Activated naive CD4-positive, alpha-beta T cell treated with anti-CD3 and anti-CD28 coated beads for 36 hours (primary cell): ENCODE measurements at regions of chr5 and their contacts with region 1.

Region 1: DNA sequence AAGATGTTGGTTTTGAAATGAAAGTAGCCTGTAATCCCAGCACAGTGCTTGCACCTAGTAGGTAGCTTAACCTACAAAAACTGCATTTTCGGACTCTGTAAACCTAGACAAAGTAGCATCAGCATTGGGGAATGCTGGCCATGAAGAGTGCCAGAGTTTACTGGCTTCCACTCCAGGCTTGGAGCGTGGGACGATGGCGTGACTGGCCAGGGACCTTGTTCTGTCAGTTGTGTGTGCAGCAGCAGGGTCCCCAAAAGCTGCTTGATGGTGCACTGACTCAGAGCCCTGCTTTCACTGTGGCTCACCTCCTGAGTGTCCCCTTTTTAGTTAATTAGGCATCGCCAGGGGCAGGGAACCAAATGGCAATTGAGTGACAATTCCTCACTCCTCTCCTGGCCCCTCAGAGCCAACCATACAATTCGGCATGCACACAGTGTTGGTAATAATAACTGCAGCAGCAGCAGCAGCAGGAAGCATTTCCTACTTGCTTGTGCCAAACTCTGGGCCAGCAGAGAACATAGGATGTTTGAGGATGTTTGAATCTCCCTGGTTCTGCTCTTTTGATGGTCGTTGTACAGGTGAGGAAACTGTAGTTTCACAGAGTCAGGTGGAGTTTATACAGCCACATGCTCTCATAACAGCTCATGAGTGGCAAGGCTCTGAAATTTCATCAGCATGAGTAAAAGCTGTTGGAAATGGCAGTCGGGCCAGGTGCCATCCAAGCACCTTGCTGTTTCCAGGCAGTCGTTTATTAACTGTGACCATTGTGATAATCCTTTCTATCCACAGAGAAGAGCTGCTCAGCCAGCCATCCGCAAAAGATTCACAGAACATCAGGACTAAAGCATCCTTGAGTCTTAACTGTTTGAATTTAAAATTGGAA is 4.2 kb downstream of the UBE2QL1 start:
- DNase-seq: no peak
- H3K4me3 Mint-ChIP-seq: no peak overlapping the region
- H3K27ac Mint-ChIP-seq: no peak overlapping the region
- H3K4me1 Mint-ChIP-seq: peaks cover 12% of the 10 kb centered on the region
- H3K27me3 Mint-ChIP-seq: peaks cover 74% of the 10 kb centered on the region

Region 2: DNA sequence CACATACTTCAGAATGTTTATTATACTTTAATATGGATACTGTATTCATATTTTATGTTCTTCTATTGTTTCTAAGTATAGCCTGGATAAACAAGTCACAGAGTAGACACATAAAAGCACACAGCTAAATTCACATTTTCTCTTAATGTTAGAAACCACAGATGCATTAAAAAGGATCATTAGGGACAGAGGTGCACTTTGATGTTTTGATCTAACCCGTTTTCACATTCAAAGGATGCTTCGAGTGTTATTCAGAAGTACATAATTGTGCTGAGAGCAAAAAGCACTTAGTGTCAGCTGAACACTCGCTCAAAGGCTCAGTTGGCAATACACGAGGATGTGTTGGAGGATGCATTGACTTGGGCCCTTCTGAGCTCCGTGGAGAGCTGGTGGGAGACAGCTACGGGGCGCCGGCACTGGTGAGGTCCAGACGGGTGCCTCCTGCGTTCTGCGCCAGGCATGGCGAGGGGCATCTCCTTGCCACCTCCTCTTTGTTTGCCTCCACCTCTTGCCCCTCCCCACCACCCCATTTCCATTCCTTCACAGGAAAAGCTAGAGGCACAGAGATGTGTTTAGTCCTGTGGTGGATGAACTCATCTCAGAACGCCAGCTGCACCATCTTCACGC is 110.1 kb before region 1 on chr5:
- CTCF ChIA-PET with region 1: no interaction called
- intact Hi-C with region 1: no loop called
- DNase-seq: no peak
- H3K4me3 Mint-ChIP-seq: no peak overlapping the region
- H3K27ac Mint-ChIP-seq: no peak overlapping the region
- H3K4me1 Mint-ChIP-seq: no peaks in the 10 kb centered on the region
- H3K27me3 Mint-ChIP-seq: no peaks in the 10 kb centered on the region

Region 3: DNA sequence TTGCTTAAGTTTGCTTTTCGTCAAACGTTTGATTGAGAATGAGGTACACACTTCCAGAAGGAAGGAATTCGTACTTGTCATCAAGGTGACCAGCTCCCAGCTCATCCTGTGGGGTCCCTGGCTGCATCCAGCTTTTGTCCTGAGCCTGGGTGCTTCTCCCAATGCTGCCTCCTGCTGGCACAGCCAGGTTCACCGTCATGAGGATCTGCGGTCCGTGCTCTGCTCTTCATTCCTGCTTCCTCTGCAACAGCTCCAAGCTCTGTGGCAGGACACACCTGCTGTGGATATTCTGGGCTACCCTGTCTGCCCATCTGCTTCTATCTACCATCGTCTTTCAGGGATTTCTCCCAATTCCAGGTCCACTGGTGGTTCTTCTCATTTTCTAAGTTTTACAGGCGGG is 17.5 kb before region 1 on chr5:
- CTCF ChIA-PET with region 1: no interaction called
- intact Hi-C with region 1: no loop called
- DNase-seq: peak; percentile 28
- H3K4me3 Mint-ChIP-seq: no peak overlapping the region
- H3K27ac Mint-ChIP-seq: no peak overlapping the region
- H3K4me1 Mint-ChIP-seq: no peaks in the 10 kb centered on the region
- H3K27me3 Mint-ChIP-seq: peaks cover 41% of the 10 kb centered on the region

Region 4: DNA sequence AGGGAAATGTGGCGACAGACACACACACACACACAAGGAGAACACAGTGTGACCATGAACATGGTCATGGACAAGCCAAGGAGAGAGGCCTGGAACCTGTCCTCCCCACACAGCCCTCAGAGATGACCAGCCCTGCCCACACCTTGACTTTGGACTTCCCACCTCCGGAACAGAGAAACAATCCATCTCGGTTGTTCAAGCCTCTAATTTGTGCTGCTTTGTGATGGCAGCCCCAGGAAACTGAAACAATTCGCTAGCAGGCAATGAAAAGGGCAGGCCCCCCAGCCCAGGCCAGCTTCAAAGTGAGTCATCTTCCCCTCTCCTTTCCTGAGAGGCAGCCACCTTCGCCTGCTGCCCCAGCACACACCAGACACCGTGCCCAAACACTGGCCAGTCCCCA is 132.3 kb after region 1 on chr5:
- CTCF ChIA-PET with region 1: interaction called, 4 read pairs
- intact Hi-C with region 1: loop called (anchors 5 kb)
- DNase-seq: no peak
- H3K4me3 Mint-ChIP-seq: no peak overlapping the region
- H3K27ac Mint-ChIP-seq: no peak overlapping the region
- H3K4me1 Mint-ChIP-seq: peaks cover 2% of the 10 kb centered on the region
- H3K27me3 Mint-ChIP-seq: peaks cover 35% of the 10 kb centered on the region